ENCODE measurements at regions of chr3 and their contacts with region 1.

Region 1: DNA sequence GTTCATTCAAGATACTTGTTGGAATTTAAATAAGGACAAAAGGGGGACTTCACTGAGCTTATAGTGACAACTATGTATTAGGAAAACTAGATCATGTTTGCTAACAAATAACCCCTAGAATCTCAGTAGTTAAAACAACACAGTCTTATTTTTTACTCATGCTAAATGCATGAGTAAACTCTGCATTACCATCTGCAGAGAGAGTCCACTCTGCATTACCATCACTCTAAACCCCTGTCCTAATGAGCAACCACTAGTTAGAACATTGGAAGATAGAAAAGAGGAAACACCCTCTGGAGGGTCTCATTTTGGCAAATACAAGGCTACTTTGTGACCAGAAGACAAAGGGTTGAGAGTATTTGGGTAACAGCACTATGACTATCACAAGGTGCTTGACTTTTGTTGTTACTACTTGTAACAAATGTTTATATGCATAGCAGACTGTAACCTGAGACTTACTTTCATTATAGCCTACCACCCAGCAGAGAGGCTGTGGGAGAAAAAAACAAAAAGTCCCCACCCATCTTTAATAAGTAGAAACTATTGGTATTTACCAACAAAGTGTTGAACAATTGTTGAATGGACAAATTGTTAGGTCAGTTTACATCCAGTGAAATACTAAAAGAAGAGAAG is 99.1 kb downstream of the OXSM start:
- DNase-seq: no peak
- ATAC-seq: peak; percentile 80
- H3K4me3 Mint-ChIP-seq: peak overlapping the region; percentile 16; the same call in 1 of the 2 replicates
- H3K27ac Mint-ChIP-seq: no peak overlapping the region; the same call in 1 of the 2 replicates
- H3K4me1 Mint-ChIP-seq: peaks cover 19% of the 10 kb centered on the region
- H3K27me3 Mint-ChIP-seq: no peaks in the 10 kb centered on the region
- CTCF ChIP-seq: no peak

Region 2: GRCh38 chr3:25856902-25857518 is 32.0 kb before region 1 on chr3:
- CTCF ChIA-PET with region 1: interaction called, 12 read pairs
- POLR2A ChIA-PET with region 1: no interaction called
- DNase-seq: no peak
- ATAC-seq: peak; percentile 88
- H3K4me3 Mint-ChIP-seq: no peak overlapping the region
- H3K27ac Mint-ChIP-seq: 0 out of 2 replicates have a peak overlapping the region, but pooled peaks have one; percentile 52
- H3K4me1 Mint-ChIP-seq: peaks cover 34% of the 10 kb centered on the region
- H3K27me3 Mint-ChIP-seq: no peaks in the 10 kb centered on the region
- CTCF ChIP-seq: no peak

Measured in WTC11 (cell line).